Caco-2 (cell line): ENCODE measurements at regions of chr19 and their contacts with region 1.

Region 1: DNA sequence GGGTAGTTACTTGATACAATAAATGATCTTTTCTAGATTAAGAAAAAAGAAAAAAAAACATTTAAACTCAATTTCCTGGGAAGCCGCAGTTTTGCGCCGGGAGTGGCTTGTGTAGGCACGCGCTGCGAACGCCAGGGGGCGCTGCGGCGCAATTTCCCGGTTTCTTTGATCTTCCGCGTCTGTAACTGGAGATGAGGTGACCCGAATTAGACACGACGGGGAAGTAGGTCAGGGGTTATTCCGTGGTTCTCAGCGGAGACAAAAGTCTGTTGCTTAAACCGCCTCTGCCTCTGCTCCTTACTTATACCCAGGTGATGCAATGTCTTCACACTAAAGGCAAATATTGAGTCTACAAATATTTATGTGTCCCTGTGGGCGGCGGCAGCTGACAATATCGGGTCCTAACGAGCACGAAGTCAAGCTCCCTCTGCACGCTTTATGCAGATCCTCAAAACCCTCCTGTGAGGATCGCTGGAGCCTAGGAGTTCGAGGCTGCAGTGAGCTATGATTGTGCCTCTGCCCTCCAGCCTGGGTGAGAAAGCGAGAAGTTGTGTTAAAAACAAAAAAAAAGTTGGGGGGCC is 15.2 kb downstream of the STXBP2 start:
- DNase-seq: peak; percentile 88 to 92
- H3K4me3 ChIP-seq: peak overlapping the region; percentile 1; the same call in 1 of the 2 replicates
- H3K4me3 Mint-ChIP-seq: peak overlapping the region; percentile 80
- H3K27ac Mint-ChIP-seq: peak overlapping the region; percentile 93
- H3K4me1 ChIP-seq: no peaks in the 10 kb centered on the region
- H3K4me1 Mint-ChIP-seq: peaks cover 13% of the 10 kb centered on the region
- H3K27me3 ChIP-seq: no peaks in the 10 kb centered on the region
- H3K27me3 Mint-ChIP-seq: no peaks in the 10 kb centered on the region
- CTCF ChIP-seq: peak; percentile 90 to 92

Region 2: DNA sequence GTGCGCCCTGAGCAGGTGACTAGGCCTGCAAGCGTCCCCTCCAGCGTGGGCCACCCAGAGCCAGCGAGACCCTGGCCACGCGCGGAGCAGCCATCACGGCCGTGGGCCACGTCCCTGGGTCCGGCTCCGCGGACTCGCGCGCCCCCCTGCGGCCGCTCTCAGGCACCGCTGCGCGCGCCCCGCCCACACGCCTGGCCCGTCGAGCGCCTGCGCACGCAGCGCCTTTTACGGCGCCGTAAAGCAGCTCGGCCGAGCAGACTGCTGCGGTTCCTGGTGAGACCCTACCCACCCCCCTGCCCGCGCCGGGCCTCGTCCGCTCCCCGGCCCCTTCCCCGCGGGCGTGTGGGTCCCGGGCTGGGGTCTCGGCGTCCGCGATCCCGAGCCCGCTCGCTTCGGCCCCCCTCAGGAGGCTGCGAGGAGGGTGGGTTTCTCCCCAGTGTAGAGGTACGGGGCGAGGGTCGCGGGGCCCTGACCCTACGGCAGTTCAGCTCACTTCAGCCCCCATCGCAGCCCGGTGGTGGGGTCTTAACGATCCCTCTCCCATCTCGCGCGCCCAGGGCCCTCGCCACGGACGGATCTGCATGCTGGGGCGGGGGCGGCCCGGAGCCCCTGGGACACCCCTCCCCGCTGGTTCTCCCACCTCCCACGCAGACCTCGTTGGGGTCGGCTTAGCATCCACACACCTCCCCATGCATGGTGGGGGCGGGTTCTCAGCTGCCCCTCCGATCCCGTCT is 28.6 kb after region 1 on chr19 and contains the start of gene TRAPPC5:
- CTCF ChIA-PET with region 1: interaction called, 13 read pairs
- POLR2A ChIA-PET with region 1: no interaction called
- intact Hi-C with region 1: loop called (anchors 1 kb)
- DNase-seq: peak; percentile 79 to 89
- H3K4me3 ChIP-seq: peak within 1 kb of the TSS; percentile 97
- H3K4me3 Mint-ChIP-seq: peak within 1 kb of the TSS; percentile 82
- H3K27ac Mint-ChIP-seq: peak within 1 kb of the TSS; percentile 77
- H3K4me1 ChIP-seq: peaks cover 13% of the 10 kb centered on the region; the same call in 1 of the 2 replicates
- H3K4me1 Mint-ChIP-seq: peaks cover 8% of the 10 kb centered on the region
- H3K27me3 ChIP-seq: no peaks in the 10 kb centered on the region
- H3K27me3 Mint-ChIP-seq: no peaks in the 10 kb centered on the region
- CTCF ChIP-seq: peak; percentile 32 to 94
- total RNA-seq, gene TRAPPC5: 80.3 and 83.4 TPM in 2 replicates